ENCODE measurements at regions of chr16 and their contacts with region 1.

Region 1: GRCh38 chr16:68538880-68539701 is at the start of gene ZFP90:
- DNase-seq: peak; percentile 63 to 92 (median 83)
- ATAC-seq: peak; percentile 85
- H3K4me3 ChIP-seq: peak within 1 kb of the TSS; percentile 88 to 96
- H3K4me3 Mint-ChIP-seq: peak within 1 kb of the TSS; percentile 96
- H3K27ac ChIP-seq: peak within 1 kb of the TSS; percentile 92 to 94
- H3K27ac Mint-ChIP-seq: peak within 1 kb of the TSS; percentile 100
- H3K4me1 ChIP-seq: peaks cover 16% of the 10 kb centered on the region
- H3K4me1 Mint-ChIP-seq: peaks cover 25% of the 10 kb centered on the region
- H3K27me3 ChIP-seq: no peaks in the 10 kb centered on the region
- H3K27me3 Mint-ChIP-seq: no peaks in the 10 kb centered on the region
- CTCF ChIP-seq: no peak
- total RNA-seq, gene ZFP90: 17.0 to 23.5 TPM

Region 2: DNA sequence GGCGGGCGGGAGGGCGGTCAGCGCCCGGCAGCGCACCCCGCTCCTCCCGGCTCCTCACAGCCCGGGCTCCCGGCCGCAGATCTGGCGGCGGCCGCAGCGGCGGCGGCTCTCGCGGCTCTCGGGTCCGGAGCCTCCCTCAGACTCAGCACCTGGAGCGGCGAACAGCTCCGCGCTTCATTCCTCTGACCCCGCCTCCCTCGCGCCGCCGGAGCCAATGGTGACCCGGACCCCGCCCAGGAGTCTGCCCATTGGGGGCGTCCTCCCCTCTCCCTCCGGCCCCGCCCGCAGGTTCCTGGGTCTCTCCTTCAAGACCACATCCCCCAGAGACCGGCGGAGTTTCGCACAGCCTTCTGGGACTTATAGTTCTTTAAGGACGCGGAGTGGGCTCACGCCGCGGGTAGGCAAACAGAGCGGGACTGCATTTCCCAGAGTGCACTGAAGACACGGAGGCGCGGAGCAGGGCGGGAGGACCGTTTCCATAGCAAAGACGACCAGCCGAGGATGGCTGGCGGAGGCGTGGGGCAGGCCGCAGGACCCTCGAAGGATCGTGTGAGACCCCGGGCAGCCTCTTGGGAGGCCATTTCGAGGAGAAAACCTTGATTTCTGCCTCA is 90.6 kb before region 1 on chr16 and contains the start of gene SMPD3:
- CTCF ChIA-PET with region 1: no interaction called
- POLR2A ChIA-PET with region 1: no interaction called
- intact Hi-C with region 1: loop called in 1 of 2 experiments (anchors 1 kb)
- DNase-seq: peak; percentile 96 to 99 (median 98)
- ATAC-seq: peak; percentile 98
- H3K4me3 ChIP-seq: peak within 1 kb of the TSS; percentile 46 to 49
- H3K4me3 Mint-ChIP-seq: peak within 1 kb of the TSS; percentile 68
- H3K27ac ChIP-seq: peak within 1 kb of the TSS in 1 of 2 experiments; percentile 37
- H3K27ac Mint-ChIP-seq: no peak within 1 kb of the TSS
- H3K4me1 ChIP-seq: peaks cover 26% of the 10 kb centered on the region
- H3K4me1 Mint-ChIP-seq: peaks cover 21% of the 10 kb centered on the region
- H3K27me3 ChIP-seq: peaks cover 18 to 25% of the 10 kb centered on the region in 2 experiments
- H3K27me3 Mint-ChIP-seq: peaks cover 24% of the 10 kb centered on the region
- CTCF ChIP-seq: no peak
- total RNA-seq, gene SMPD3: 0.24 to 0.25 TPM

Region 3: GRCh38 chr16:68627951-68628425 is 88.9 kb after region 1 on chr16:
- CTCF ChIA-PET with region 1: no interaction called
- POLR2A ChIA-PET with region 1: no interaction called
- intact Hi-C with region 1: no loop called
- DNase-seq: no peak
- ATAC-seq: no peak
- H3K4me3 ChIP-seq: no peak overlapping the region
- H3K4me3 Mint-ChIP-seq: no peak overlapping the region
- H3K27ac ChIP-seq: no peak overlapping the region
- H3K27ac Mint-ChIP-seq: no peak overlapping the region
- H3K4me1 ChIP-seq: no peaks in the 10 kb centered on the region
- H3K4me1 Mint-ChIP-seq: no peaks in the 10 kb centered on the region
- H3K27me3 ChIP-seq: no peaks in the 10 kb centered on the region
- H3K27me3 Mint-ChIP-seq: peaks cover 6% of the 10 kb centered on the region
- CTCF ChIP-seq: no peak